ENCODE measurements at regions of chr11 and their contacts with region 1.

Region 1: DNA sequence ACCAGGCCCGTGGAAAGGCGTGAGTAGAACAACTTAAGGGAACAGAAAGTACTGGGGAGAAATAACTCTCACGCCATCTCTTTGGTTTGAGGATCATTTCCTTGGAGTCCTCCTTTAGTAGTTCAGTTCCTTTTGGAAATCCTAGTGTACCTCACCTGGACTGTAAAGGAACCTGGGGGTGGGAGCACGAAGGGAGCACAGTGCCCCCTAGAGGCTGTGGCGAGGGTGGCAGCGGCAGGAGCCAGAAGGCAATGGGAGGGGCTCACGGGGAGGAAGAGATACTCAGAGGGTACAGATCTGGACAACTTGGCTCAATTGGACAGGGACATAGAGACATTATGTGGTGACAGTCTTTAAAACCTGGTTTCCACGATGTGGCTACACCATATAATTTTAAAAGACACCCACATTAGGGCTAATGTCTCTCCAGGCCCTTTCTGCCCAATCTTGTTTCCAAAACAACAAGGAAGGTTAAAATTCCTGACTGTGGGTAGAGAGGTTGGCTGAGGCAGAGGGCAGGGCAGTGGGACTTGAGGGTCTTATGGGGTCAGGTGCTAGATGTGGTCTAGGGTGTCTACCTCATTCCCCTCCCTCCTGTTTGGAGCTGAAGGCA is 87.0 kb downstream of the CSNK2A3 start:
- DNase-seq: peak; percentile 74
- H3K4me3 ChIP-seq: no peak overlapping the region
- H3K27ac ChIP-seq: no peak overlapping the region
- H3K4me1 ChIP-seq: peaks cover 53% of the 10 kb centered on the region
- CTCF ChIP-seq: peak; percentile 97

Region 2: DNA sequence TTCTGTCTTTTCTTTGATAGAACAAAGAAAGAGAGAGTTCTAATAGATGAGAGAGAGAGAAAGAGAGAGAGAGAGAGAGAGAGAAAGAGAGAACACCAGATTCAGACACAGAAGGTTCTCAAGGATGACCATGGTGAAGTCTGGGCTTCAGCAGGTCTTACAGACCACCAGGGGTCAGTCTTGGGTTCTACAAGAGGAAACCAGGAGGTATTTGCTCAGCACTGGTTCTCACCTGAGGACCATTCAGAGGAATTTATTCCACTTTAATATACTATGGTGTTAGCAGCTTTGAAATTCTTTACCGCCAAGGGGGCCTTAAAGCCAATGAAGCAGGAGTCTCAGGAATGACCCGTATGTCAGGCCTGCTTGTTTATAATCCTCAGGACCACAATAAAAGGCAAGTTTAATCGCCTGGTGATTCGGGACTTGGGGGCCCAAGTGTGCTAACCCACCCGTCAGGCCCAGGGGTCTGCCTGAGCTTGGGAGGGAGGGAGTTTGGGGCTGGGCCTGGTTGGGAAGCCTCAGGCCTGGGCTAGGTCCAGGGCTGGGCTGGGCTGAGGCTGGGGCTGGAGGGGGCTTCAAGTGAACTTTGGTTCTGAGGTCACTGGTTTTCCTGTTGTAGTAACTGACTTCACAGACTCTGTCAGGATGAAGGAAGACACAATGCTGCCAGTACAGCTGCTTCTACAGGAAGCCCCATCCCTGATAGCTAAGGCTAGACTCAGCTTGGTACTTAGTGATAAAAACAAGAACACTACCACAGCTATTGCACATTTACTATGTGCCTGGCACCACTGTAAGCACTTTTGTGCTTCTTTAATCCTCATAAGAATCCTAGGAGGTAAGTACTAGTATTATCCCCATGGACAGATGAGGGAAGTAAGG is 229.0 kb before region 1 on chr11:
- CTCF ChIA-PET with region 1: no interaction called
- POLR2A ChIA-PET with region 1: interaction called, 3 read pairs
- intact Hi-C with region 1: loop called (anchors 2 kb)
- DNase-seq: peak; percentile 76
- H3K4me3 ChIP-seq: no peak overlapping the region
- H3K27ac ChIP-seq: no peak overlapping the region
- H3K4me1 ChIP-seq: no peaks in the 10 kb centered on the region
- CTCF ChIP-seq: peak; percentile 83

Region 3: DNA sequence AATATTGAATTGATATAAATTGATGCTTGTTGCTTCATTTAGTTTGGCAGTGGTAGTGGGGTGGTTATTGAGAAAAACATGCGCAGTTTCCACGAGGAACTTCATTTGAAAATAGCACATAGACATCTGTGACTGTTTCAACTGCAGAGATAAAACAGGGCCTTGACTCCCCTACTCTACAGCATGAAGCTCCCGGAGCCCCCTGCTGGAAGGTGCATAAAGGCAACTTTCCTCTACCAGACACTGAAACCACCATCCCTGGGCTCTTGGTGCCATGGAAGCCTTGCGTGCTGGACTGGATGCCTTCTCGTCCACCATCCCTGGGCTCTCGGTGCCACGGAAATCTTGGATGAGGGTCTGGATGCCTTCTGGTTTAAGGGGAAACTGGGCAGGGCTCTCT is 108.9 kb before region 1 on chr11:
- CTCF ChIA-PET with region 1: no interaction called
- POLR2A ChIA-PET with region 1: no interaction called
- intact Hi-C with region 1: loop called (anchors 2 kb)
- DNase-seq: peak; percentile 40
- H3K4me3 ChIP-seq: no peak overlapping the region
- H3K27ac ChIP-seq: no peak overlapping the region
- H3K4me1 ChIP-seq: no peaks in the 10 kb centered on the region
- CTCF ChIP-seq: peak; percentile 72

Region 4: DNA sequence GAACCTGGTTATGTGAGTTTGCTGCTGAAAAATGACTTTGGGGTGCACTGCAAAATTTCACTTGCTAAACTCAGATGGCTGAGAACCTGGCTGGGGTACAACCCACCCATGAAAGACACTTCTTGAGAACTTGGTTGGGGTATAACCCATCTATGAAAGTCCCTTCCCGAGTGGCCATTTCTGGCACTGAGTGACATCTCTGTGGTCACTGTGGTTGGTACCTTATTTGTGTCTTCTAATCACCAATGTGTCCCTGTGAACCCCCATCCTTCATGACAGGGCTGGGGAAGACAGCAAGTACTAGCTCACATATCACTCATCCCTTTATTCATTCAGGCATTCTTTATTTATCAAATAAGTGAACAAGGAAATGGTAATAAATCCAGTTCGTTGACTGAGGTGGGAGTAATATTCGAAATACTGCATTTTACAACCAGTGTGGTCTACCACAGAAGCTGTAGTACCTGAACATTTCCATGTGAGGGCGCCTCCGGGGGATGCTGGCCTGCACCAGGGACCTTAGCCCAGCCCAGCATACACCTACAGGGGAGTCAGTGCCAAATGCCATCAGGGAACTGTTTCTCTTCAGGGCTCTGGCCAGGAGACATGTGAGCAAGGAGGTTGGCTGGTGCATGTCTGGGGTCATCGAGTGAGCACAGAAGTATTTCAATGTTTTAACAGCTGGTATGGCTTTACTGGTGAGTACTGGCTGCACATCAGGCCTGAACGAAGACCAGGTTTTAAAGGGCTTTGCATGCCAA is 35.1 kb before region 1 on chr11:
- CTCF ChIA-PET with region 1: no interaction called
- POLR2A ChIA-PET with region 1: interaction called, 5 read pairs
- intact Hi-C with region 1: loop called (anchors 1 kb)
- DNase-seq: peak; percentile 61
- H3K4me3 ChIP-seq: no peak overlapping the region
- H3K27ac ChIP-seq: no peak overlapping the region
- H3K4me1 ChIP-seq: no peaks in the 10 kb centered on the region
- CTCF ChIP-seq: peak; percentile 80